Activated B cell treated with CpG ODN at 0.5 μM for 24 hours (primary cell): ENCODE measurements at regions of chr22 and their contacts with region 1.

Region 1: DNA sequence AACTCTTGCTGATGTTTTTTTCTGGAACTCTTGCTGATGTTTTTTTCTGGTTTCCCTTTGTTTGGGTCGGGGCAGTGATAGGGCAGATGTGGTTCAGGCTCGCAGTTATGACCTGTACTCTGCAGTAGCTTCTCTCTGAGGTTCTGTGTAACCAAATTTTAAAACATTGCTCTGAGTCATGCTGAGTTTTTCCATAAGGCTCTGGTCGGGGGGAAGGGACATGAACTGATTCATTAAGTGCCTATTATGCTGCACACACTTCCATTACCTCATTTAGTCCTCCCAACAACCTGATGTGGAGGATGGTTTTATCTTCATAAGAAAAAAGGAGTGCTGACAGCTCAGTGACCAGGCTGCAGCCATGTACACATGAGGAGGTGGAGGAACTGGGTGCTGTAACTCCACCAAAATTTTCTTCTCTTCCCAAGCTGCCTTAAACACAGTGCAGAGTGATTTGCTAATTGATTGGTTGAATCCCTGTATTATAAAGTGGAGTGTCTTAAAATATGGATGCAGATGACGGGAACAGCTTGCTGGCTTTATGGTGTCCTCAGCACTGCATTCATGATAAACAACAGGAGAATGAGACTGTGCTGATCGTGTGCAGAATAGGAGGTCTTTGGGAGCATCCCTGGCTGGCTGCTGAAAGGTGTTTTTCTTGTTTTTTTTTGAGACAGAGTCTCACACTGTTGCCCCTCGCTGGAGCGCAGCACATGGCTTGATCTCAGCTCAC is 19.1 kb downstream of the TNRC6B start:
- DNase-seq: no peak
- ATAC-seq: peak; percentile 81
- H3K4me3 Mint-ChIP-seq: peak overlapping the region; percentile 2
- H3K27ac Mint-ChIP-seq: peak overlapping the region; percentile 43
- H3K4me1 Mint-ChIP-seq: peaks cover 81% of the 10 kb centered on the region
- H3K27me3 Mint-ChIP-seq: no peaks in the 10 kb centered on the region
- CTCF ChIP-seq: no peak

Region 2: GRCh38 chr22:39908737-39909136 is 288.1 kb before region 1 on chr22:
- CTCF ChIA-PET with region 1: no interaction called
- POLR2A ChIA-PET with region 1: no interaction called
- intact Hi-C with region 1: no loop called
- DNase-seq: no peak
- ATAC-seq: no peak
- H3K4me3 Mint-ChIP-seq: no peak overlapping the region
- H3K27ac Mint-ChIP-seq: no peak overlapping the region
- H3K4me1 Mint-ChIP-seq: peaks cover 56% of the 10 kb centered on the region
- H3K27me3 Mint-ChIP-seq: no peaks in the 10 kb centered on the region
- CTCF ChIP-seq: no peak

Region 3: DNA sequence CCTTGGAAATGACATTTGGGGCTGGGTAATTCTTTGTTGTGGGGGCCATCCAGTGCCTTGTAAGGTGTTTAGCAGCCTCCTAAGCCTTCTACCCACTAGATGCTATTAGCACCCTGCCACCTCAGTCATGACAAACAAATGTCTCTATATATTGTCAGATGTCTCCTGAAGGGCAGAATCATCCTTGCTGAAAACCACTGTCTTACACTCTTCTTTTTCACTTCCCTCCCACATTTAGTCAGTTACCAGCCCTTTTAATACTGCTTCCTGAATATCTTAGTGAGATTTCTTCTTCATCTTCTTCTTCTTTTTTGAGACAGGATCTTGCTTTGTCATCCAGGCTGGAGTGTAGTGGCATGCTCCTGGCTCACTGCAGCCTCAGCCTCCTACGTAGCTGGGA is 14.0 kb after region 1 on chr22:
- CTCF ChIA-PET with region 1: no interaction called
- POLR2A ChIA-PET with region 1: interaction called, 6 read pairs
- intact Hi-C with region 1: loop called (anchors 2 kb)
- DNase-seq: no peak
- ATAC-seq: peak; percentile 95
- H3K4me3 Mint-ChIP-seq: peak overlapping the region; percentile 33
- H3K27ac Mint-ChIP-seq: peak overlapping the region; percentile 76
- H3K4me1 Mint-ChIP-seq: peaks cover 76% of the 10 kb centered on the region
- H3K27me3 Mint-ChIP-seq: no peaks in the 10 kb centered on the region
- CTCF ChIP-seq: no peak